GM12878 (cell line): ENCODE measurements at regions of chr10 and their contacts with region 1.

Region 1: DNA sequence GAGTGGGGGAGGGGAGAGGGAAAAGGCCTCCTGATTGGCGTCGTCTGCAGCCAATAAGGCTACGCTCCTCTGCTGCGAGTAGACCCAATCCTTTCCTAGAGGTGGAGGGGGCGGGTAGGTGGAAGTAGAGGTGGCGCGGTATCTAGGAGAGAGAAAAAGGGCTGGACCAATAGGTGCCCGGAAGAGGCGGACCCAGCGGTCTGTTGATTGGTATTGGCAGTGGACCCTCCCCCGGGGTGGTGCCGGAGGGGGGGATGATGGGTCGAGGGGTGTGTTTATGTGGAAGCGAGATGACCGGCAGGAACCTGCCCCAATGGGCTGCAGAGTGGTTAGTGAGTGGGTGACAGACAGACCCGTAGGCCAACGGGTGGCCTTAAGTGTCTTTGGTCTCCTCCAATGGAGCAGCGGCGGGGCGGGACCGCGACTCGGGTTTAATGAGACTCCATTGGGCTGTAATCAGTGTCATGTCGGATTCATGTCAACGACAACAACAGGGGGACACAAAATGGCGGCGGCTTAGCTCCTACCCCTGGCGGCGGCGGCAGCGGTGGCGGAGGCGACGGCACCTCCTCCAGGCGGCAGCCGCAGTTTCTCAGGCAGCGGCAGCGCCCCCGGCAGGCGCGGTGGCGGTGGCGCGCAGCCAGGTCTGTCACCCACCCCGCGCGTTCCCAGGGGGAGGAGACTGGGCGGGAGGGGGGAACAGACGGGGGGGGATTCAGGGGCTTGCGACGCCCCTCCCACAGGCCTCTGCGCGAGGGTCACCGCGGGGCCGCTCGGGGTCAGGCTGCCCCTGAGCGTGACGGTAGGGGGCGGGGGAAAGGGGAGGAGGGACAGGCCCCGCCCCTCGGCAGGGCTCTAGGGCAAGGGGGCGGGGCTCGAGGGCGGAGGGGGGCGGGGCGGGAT is at the start of gene KAT6B:
- DNase-seq: peak; percentile 100
- ATAC-seq: peak; percentile 90
- H3K4me3 ChIP-seq: peak within 1 kb of the TSS; percentile 93
- H3K27ac ChIP-seq: peak within 1 kb of the TSS; percentile 91
- H3K4me1 ChIP-seq: peaks cover 9% of the 10 kb centered on the region; the same call in 1 of the 2 replicates
- H3K27me3 ChIP-seq: no peaks in the 10 kb centered on the region
- CTCF ChIP-seq: peak; percentile 11 to 41 (median 17); a peak in 3 of 6 replicates
- EP300 ChIP-seq: 0 out of 4 replicates have a peak, but pooled peaks of 1 of the 2 experiments have one; percentile 34
- POLR2A ChIP-seq: peak; percentile 87
- RAD21 ChIP-seq: no peak; the same call in 1 of the 2 replicates
- polyA plus RNA-seq, gene KAT6B: 2.7 to 5.3 TPM

Region 2: DNA sequence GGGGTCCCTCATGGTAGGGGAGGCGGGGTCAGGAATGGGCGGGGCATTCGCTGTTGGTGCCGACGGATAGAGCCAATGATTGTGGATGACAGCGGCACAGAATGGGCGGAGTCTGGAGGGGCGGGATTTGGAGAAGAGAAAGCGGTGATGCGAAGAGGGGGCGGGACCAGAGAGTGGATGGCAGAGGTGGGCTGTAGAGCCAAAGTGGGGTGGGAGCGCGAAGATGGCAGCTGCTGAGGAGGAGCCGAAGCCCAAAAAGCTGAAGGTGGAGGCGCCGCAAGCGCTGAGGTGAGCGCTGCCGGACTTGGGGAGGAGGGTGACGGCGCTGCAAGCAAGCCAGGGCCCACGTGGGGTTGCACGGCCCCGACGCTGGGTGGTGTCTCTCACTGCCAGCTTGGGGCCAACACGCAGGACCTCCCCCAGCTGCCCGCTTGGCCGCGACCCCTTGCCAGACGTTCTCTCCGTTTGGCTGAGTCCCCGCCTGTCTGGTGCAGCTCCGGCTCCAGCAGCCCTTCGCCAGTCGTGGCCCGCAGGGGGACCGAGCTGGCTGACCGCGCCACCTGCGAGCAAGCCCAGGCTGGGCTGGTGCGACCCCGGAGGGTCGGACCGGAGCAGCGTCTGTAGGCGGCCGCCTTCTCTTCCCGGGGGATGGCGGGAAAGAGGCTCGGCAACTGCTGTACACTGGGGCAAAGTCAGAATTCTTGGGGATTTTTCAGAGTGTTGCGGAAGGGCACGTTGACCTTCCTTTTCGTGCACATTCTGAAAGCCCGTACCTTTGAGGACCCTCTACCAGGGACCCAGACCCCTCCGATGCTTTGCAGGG is 675.1 kb before region 1 on chr10 and contains the start of gene ADK:
- CTCF ChIA-PET with region 1: no interaction called
- POLR2A ChIA-PET with region 1: no interaction called
- RAD21 ChIA-PET with region 1: no interaction called
- SMC1A ChIA-PET with region 1: no interaction called
- in situ Hi-C with region 1: no loop called
- intact Hi-C with region 1: loop called (anchors 10 kb)
- DNase-seq: no peak
- ATAC-seq: peak; percentile 92
- H3K4me3 ChIP-seq: peak within 1 kb of the TSS; percentile 97
- H3K27ac ChIP-seq: peak within 1 kb of the TSS; percentile 99
- H3K4me1 ChIP-seq: peaks cover 11% of the 10 kb centered on the region; the same call in 1 of the 2 replicates
- H3K27me3 ChIP-seq: no peaks in the 10 kb centered on the region
- CTCF ChIP-seq: peak; percentile 20 to 38 (median 29); a peak in 4 of 6 replicates
- EP300 ChIP-seq: no peak
- POLR2A ChIP-seq: peak; percentile 84
- RAD21 ChIP-seq: peak; percentile 21; the same call in 1 of the 2 replicates
- polyA plus RNA-seq, gene ADK: 107 to 117 TPM

Region 3: DNA sequence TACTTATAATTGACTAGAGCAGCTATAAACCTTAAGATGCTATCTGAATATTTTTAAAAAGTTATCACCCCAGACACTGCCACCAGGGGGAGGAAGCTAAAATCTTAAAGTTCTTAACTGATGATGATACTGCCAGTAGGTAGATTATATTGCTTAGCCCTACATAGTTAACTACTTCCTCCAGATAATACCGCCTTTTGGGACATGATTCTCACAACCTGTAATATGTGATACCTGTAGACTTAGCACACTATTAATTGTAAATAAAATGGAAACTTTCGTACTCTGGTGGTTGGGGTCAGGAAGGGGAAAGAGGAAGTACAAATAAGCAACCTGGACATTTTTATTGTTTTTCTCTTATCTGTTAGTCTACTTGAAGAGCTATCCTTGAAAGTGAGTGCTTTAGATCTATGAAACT is 406.4 kb before region 1 on chr10:
- CTCF ChIA-PET with region 1: no interaction called
- POLR2A ChIA-PET with region 1: no interaction called
- RAD21 ChIA-PET with region 1: interaction called, 4 read pairs
- SMC1A ChIA-PET with region 1: interaction called, 3 read pairs
- in situ Hi-C with region 1: no loop called
- intact Hi-C with region 1: loop called (anchors 10 kb)
- DNase-seq: peak; percentile 5
- ATAC-seq: peak; percentile 84
- H3K4me3 ChIP-seq: no peak overlapping the region
- H3K27ac ChIP-seq: no peak overlapping the region
- H3K4me1 ChIP-seq: no peaks in the 10 kb centered on the region
- H3K27me3 ChIP-seq: no peaks in the 10 kb centered on the region
- CTCF ChIP-seq: peak; percentile 16 to 44 (median 38); a peak in 4 of 6 replicates
- EP300 ChIP-seq: no peak
- POLR2A ChIP-seq: no peak
- RAD21 ChIP-seq: 0 out of 2 replicates have a peak, but pooled peaks have one; percentile 29

Region 4: DNA sequence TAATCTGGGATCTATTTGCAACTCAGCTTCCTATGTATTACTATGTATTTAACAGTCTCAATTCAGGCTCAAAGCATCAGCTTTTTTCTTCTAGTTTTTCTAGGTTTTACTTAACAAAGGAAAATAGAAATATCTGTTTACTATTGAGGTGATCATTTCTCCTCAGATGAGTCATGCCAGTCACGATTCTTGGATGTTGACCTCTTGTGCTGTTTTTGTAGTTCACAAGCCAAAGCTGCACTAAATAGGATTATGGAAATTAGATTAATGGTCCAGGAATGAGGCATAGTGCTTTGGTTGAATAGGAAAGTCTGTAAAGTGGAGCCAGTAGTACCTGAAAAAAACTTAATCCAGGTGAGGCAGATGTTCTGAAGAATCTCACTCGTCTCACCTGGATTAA is 198.3 kb before region 1 on chr10:
- CTCF ChIA-PET with region 1: no interaction called
- POLR2A ChIA-PET with region 1: no interaction called
- RAD21 ChIA-PET with region 1: no interaction called
- SMC1A ChIA-PET with region 1: no interaction called
- in situ Hi-C with region 1: no loop called
- intact Hi-C with region 1: no loop called
- DNase-seq: no peak
- ATAC-seq: no peak
- H3K4me3 ChIP-seq: no peak overlapping the region
- H3K27ac ChIP-seq: no peak overlapping the region
- H3K4me1 ChIP-seq: no peaks in the 10 kb centered on the region
- H3K27me3 ChIP-seq: no peaks in the 10 kb centered on the region
- CTCF ChIP-seq: no peak
- EP300 ChIP-seq: no peak
- POLR2A ChIP-seq: no peak
- RAD21 ChIP-seq: no peak

Region 5: GRCh38 chr10:74677951-74678350 is 148.4 kb before region 1 on chr10:
- CTCF ChIA-PET with region 1: no interaction called
- POLR2A ChIA-PET with region 1: no interaction called
- RAD21 ChIA-PET with region 1: interaction called, 5 read pairs
- SMC1A ChIA-PET with region 1: interaction called, 5 read pairs
- in situ Hi-C with region 1: no loop called
- intact Hi-C with region 1: loop called (anchors 5 kb)
- DNase-seq: peak; percentile 74
- ATAC-seq: peak; percentile 93
- H3K4me3 ChIP-seq: no peak overlapping the region
- H3K27ac ChIP-seq: peak overlapping the region; percentile 52; the same call in 1 of the 2 replicates
- H3K4me1 ChIP-seq: peaks cover 41% of the 10 kb centered on the region
- H3K27me3 ChIP-seq: no peaks in the 10 kb centered on the region
- CTCF ChIP-seq: 0 out of 6 replicates have a peak, but pooled peaks of 1 of the 3 experiments have one; percentile 6
- EP300 ChIP-seq: no peak; a peak in 1 of 4 replicates
- POLR2A ChIP-seq: no peak
- RAD21 ChIP-seq: peak; percentile 26; the same call in 1 of the 2 replicates

Region 6: GRCh38 chr10:74787457-74787856 is 38.9 kb before region 1 on chr10:
- CTCF ChIA-PET with region 1: no interaction called
- POLR2A ChIA-PET with region 1: no interaction called
- RAD21 ChIA-PET with region 1: no interaction called
- SMC1A ChIA-PET with region 1: no interaction called
- in situ Hi-C with region 1: no loop called
- intact Hi-C with region 1: no loop called
- DNase-seq: no peak
- ATAC-seq: no peak
- H3K4me3 ChIP-seq: no peak overlapping the region
- H3K27ac ChIP-seq: no peak overlapping the region
- H3K4me1 ChIP-seq: no peaks in the 10 kb centered on the region
- H3K27me3 ChIP-seq: no peaks in the 10 kb centered on the region
- CTCF ChIP-seq: no peak
- EP300 ChIP-seq: no peak
- POLR2A ChIP-seq: no peak
- RAD21 ChIP-seq: no peak

Region 7: DNA sequence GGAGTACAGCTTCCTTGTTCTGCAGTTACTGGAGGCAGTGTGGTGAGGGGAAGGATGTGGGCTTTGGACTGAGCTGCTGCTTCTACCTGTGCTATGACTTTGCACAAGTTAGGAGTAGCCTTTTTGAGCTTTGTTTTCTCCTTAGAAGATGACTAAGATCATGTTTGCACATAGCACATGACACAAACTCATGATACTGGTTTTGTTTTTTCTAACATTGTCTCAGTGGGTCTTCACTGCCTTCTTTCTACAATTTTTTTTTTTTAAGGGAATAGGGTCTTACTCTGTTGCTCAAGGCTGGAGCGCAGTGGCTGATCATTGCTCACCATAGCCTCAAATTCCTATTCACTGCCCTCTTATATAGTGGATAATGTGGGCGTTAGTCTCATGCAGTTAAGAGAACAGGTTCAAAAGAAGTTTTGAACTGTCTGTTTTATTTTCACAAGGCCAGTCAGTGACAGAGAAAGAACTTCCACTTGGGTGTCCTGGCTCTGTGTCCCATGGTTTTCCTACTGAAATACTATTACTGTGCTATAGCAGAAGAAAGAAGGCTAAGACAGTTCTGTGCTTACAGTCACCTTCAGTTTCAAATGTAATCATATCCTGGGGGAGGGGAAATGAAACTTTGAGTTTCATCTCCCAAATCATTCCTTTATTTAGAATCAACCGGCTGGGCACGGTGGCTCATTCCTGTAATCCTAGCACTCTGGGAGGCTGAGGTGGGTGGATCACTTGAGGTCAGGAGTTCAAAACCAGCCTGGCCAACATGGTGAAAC is 72.0 kb after region 1 on chr10:
- CTCF ChIA-PET with region 1: no interaction called
- POLR2A ChIA-PET with region 1: interaction called, 5 read pairs
- RAD21 ChIA-PET with region 1: interaction called, 10 read pairs
- SMC1A ChIA-PET with region 1: interaction called, 8 read pairs
- in situ Hi-C with region 1: no loop called
- intact Hi-C with region 1: no loop called
- DNase-seq: peak; percentile 67
- ATAC-seq: peak; percentile 80
- H3K4me3 ChIP-seq: no peak overlapping the region; the same call in 1 of the 2 replicates
- H3K27ac ChIP-seq: peak overlapping the region; percentile 87
- H3K4me1 ChIP-seq: peaks cover 42% of the 10 kb centered on the region
- H3K27me3 ChIP-seq: no peaks in the 10 kb centered on the region
- CTCF ChIP-seq: no peak
- EP300 ChIP-seq: no peak; a peak in 2 of 4 replicates
- POLR2A ChIP-seq: peak; percentile 48
- RAD21 ChIP-seq: no peak